ENCODE measurements at regions of chr17 and their contacts with region 1.

Region 1: GRCh38 chr17:68291844-68292695 is 775 bp downstream of the ARSG start:
- DNase-seq: peak; percentile 93
- ATAC-seq: peak; percentile 69
- H3K4me3 Mint-ChIP-seq: peak overlapping the region; percentile 94
- H3K27ac Mint-ChIP-seq: peak overlapping the region; percentile 93
- H3K4me1 Mint-ChIP-seq: peaks cover 65% of the 10 kb centered on the region
- H3K27me3 Mint-ChIP-seq: no peaks in the 10 kb centered on the region
- CTCF ChIP-seq: no peak

Region 2: DNA sequence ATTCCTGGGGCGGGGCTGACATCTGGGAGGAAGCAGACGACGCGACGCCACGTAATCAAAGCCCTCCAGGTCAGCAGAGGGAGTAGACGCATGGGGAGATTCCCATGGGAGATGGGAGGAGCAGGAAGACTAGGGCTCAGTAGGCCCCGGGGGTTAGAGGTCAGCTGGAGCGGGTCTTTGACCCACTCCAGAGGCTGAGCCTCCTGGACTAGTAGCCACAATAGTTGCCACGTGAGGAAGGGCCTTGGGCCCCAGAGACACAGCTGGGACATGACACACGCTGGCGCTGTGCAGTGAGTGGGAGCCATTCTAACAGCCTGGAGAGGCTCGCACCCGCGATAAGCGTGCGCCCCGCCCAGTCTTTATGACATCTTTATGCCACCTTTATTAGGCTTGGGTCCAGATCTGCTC is 139.9 kb before region 1 on chr17:
- CTCF ChIA-PET with region 1: no interaction called
- POLR2A ChIA-PET with region 1: no interaction called
- intact Hi-C with region 1: no loop called
- DNase-seq: no peak
- ATAC-seq: no peak
- H3K4me3 Mint-ChIP-seq: no peak overlapping the region
- H3K27ac Mint-ChIP-seq: no peak overlapping the region
- H3K4me1 Mint-ChIP-seq: no peaks in the 10 kb centered on the region
- H3K27me3 Mint-ChIP-seq: no peaks in the 10 kb centered on the region
- CTCF ChIP-seq: no peak

Region 3: GRCh38 chr17:68260051-68260762 is 31.9 kb before region 1 on chr17:
- CTCF ChIA-PET with region 1: interaction called, 16 read pairs
- POLR2A ChIA-PET with region 1: interaction called, 6 read pairs
- intact Hi-C with region 1: no loop called
- DNase-seq: no peak
- ATAC-seq: no peak
- H3K4me3 Mint-ChIP-seq: peak overlapping the region; percentile 69
- H3K27ac Mint-ChIP-seq: peak overlapping the region; percentile 93
- H3K4me1 Mint-ChIP-seq: peaks cover 63% of the 10 kb centered on the region
- H3K27me3 Mint-ChIP-seq: no peaks in the 10 kb centered on the region
- CTCF ChIP-seq: no peak

Region 4: GRCh38 chr17:68346448-68346847 is 54.4 kb after region 1 on chr17:
- CTCF ChIA-PET with region 1: interaction called, 4 read pairs
- POLR2A ChIA-PET with region 1: interaction called, 23 read pairs
- intact Hi-C with region 1: no loop called
- DNase-seq: peak; percentile 90
- ATAC-seq: peak; percentile 86
- H3K4me3 Mint-ChIP-seq: peak overlapping the region; percentile 71
- H3K27ac Mint-ChIP-seq: peak overlapping the region; percentile 97
- H3K4me1 Mint-ChIP-seq: peaks cover 65% of the 10 kb centered on the region
- H3K27me3 Mint-ChIP-seq: no peaks in the 10 kb centered on the region
- CTCF ChIP-seq: no peak

Region 5: GRCh38 chr17:68356520-68356919 is 64.5 kb after region 1 on chr17:
- CTCF ChIA-PET with region 1: interaction called, 3 read pairs
- POLR2A ChIA-PET with region 1: interaction called, 20 read pairs
- intact Hi-C with region 1: loop called (anchors 5 kb)
- DNase-seq: peak; percentile 81
- ATAC-seq: peak; percentile 92
- H3K4me3 Mint-ChIP-seq: peak overlapping the region; percentile 51
- H3K27ac Mint-ChIP-seq: peak overlapping the region; percentile 76
- H3K4me1 Mint-ChIP-seq: peaks cover 45% of the 10 kb centered on the region
- H3K27me3 Mint-ChIP-seq: no peaks in the 10 kb centered on the region
- CTCF ChIP-seq: no peak